ENCODE measurements at regions of chr4 and their contacts with region 1.

Region 1: DNA sequence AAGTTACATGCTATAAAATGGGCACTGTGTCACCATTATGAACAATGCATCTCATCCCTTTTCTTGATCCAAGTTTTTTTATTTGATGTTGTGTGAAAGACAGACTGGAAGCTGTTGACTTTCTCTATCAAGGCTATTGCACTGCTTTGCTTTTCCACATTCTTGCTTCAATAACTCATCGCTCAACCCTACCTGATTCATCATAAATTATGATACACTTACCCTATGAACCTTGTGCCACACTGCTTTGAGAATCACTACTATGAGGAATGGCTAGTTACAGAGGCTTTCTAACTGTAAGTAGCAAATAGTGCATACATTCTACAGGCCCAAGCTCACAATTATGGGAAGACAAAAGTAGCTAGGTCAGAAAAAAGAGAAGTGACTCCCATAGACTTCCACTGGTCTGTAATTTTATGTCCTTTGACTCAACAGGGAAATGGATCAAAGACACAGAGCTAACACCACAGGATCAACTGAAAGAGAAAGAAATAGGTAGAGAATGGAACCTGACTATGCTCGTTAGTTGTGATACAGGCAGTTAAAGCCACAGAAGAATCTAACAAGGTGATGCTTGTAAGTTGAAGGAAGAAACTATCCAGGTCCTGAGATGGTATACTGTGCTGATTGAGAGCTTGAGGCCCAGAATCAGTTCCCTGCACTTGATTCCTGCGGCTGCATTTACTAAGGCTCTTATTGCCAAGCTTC is 163.5 kb downstream of the PPP3CA start:
- DNase-seq: no peak
- ATAC-seq: peak; percentile 85
- H3K4me3 ChIP-seq: no peak overlapping the region
- H3K4me1 ChIP-seq: peaks cover 11% of the 10 kb centered on the region
- CTCF ChIP-seq: no peak

Region 2: GRCh38 chr4:101347557-101348366 is 163.9 kb after region 1 on chr4:
- intact Hi-C with region 1: loop called in 1 of 2 experiments (anchors 5 kb)
- DNase-seq: peak; percentile 99 to 100 (median 99)
- ATAC-seq: peak; percentile 87
- H3K4me3 ChIP-seq: peak overlapping the region; percentile 77
- H3K4me1 ChIP-seq: peaks cover 19% of the 10 kb centered on the region
- CTCF ChIP-seq: no peak

Measured in mucosa of descending colon (tissue), 3 donors.